ENCODE measurements at regions of chr20 and their contacts with region 1.

Region 1: DNA sequence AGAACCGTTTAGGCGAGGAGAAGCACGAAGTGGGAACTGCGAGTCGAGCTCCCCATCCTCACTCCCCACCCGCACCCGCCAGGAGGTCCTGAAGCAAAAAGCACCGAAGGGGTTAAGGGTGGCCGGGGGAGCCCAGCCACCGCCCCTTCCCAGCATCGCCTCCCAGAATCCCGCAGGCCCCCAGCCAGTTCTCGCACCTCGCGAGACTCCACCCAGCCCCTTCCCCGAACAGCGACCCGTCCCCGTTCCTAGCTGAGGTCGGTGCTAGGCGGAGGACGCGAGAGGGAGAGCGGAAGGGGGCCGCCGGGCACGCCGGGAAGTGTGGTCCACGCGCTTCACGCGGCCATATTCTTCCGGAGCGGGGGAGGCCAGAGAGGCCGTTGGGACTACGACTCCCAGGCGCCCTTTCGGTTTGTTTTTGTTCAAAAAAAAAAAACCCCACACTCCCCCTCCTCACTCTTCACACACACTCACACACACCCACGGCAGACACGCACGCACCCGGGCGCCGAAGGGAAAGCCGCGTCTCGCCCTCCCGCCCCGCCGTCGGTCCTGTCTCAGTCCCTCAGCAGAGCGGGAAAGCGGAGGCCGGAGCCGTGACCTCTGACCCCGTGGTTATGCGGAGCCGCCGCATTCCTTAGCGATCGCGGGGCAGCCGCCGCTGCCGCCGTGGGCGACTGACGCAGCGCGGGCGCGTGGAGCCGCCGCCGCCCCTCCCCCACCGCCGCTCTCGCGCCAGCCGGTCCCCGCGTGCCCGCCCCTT is at the start of gene ASXL1:
- DNase-seq: peak; percentile 98
- H3K4me3 Mint-ChIP-seq: peak within 1 kb of the TSS; percentile 95
- H3K27ac Mint-ChIP-seq: peak within 1 kb of the TSS; percentile 99
- H3K4me1 Mint-ChIP-seq: peaks cover 64% of the 10 kb centered on the region
- H3K27me3 Mint-ChIP-seq: no peaks in the 10 kb centered on the region
- total RNA-seq, gene ASXL1: 141 to 147 TPM

Region 2: GRCh38 chr20:32231847-32232246 is 126.2 kb before region 1 on chr20:
- CTCF ChIA-PET with region 1: interaction called, 3 read pairs
- POLR2A ChIA-PET with region 1: interaction called, 6 read pairs
- intact Hi-C with region 1: loop called (anchors 1 kb)
- DNase-seq: peak; percentile 75
- H3K4me3 Mint-ChIP-seq: peak overlapping the region; percentile 45
- H3K27ac Mint-ChIP-seq: peak overlapping the region; percentile 97
- H3K4me1 Mint-ChIP-seq: peaks cover 50% of the 10 kb centered on the region
- H3K27me3 Mint-ChIP-seq: no peaks in the 10 kb centered on the region

Region 3: GRCh38 chr20:32319100-32319499 is 39.0 kb before region 1 on chr20:
- CTCF ChIA-PET with region 1: no interaction called
- POLR2A ChIA-PET with region 1: no interaction called
- intact Hi-C with region 1: loop called (anchors 5 kb)
- DNase-seq: peak; percentile 34
- H3K4me3 Mint-ChIP-seq: no peak overlapping the region
- H3K27ac Mint-ChIP-seq: peak overlapping the region; percentile 47
- H3K4me1 Mint-ChIP-seq: peaks cover 18% of the 10 kb centered on the region
- H3K27me3 Mint-ChIP-seq: no peaks in the 10 kb centered on the region

Region 4: DNA sequence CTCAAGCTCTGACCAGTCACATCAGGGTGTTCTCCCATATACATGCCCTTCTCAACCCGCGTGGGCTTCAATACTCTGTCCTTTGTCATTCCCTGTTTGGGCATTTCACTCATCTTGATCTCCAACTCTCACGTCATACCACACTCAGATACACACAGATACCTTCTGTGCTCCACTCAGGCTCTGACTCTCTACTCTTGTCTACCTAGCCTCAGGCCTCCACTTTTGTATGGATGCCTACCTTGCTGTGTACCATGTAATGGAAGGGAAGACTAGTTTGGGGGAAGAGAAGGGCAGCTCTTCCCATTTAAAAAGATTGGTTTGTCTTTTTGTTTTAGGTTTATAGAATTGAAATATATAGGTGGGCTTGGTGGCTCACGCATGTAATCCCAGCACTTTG is 48.7 kb after region 1 on chr20:
- CTCF ChIA-PET with region 1: no interaction called
- POLR2A ChIA-PET with region 1: no interaction called
- intact Hi-C with region 1: loop called (anchors 5 kb)
- DNase-seq: no peak
- H3K4me3 Mint-ChIP-seq: no peak overlapping the region
- H3K27ac Mint-ChIP-seq: peak overlapping the region; percentile 0
- H3K4me1 Mint-ChIP-seq: peaks cover 42% of the 10 kb centered on the region
- H3K27me3 Mint-ChIP-seq: no peaks in the 10 kb centered on the region

Region 5: GRCh38 chr20:32652739-32653526 is 294.9 kb after region 1 on chr20:
- CTCF ChIA-PET with region 1: no interaction called
- POLR2A ChIA-PET with region 1: no interaction called
- intact Hi-C with region 1: loop called (anchors 10 kb)
- DNase-seq: peak; percentile 92
- H3K4me3 Mint-ChIP-seq: no peak overlapping the region
- H3K27ac Mint-ChIP-seq: peak overlapping the region; percentile 13
- H3K4me1 Mint-ChIP-seq: peaks cover 9% of the 10 kb centered on the region
- H3K27me3 Mint-ChIP-seq: no peaks in the 10 kb centered on the region

Region 6: DNA sequence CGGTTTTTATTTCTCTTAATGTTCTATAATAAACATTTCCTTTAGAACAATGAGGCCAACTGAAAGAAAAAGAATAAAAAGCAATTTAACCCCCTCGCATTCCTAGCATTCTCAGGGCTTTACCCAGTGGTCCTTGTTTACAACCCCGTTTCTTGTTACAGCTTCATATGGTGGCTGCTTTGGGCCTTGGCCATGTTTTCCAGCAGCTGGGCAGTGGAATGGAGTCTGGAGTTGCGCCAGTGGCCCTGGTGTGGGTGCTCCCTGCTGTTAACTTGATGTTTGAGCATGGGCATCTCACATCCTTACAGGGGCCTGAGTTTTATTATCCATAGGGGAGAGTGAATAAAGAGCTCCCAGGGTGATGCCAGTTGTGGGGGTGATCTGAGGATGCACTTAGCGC is 519.5 kb after region 1 on chr20:
- CTCF ChIA-PET with region 1: no interaction called
- POLR2A ChIA-PET with region 1: no interaction called
- intact Hi-C with region 1: no loop called
- DNase-seq: no peak
- H3K4me3 Mint-ChIP-seq: no peak overlapping the region
- H3K27ac Mint-ChIP-seq: no peak overlapping the region
- H3K4me1 Mint-ChIP-seq: no peaks in the 10 kb centered on the region
- H3K27me3 Mint-ChIP-seq: no peaks in the 10 kb centered on the region